ENCODE measurements at regions of chr1 and their contacts with region 1.

Region 1: DNA sequence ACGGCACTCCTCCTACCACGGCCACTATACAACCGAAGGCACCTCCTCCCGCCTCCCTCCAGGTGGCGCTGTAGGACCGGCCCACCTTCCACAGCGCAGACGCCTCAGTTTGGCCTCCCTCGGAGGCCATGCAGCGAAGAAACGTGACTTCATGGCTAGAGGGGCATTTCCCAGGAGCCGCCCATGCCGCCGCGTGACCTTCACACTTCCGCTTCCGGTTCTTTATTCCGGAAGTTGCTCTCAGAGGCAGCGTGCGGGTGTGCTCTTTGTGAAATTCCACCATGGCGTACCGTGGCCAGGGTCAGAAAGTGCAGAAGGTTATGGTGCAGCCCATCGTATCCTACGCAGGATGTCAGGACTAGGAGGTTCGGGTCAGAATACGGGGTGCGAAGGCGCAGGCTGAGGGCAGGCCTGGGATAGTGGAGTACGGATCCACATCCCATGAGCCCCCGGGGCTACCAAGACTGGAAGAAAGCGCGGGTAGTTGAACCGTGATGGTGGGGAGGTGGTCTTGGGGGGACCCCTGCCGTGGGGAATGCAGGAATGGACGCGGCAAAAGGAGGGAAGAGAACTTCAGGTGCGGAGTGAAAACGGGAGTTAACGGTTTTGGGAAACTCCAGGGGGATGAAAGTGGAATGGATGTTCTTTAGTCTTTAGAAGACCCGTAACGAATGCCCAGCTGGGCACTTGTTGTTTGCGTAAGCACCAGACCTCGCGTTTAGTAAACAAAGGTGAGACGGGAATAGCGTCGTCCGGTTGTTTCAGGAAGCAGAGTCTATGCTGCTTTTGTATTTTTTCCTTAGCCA is at the start of gene SNRPE:
- DNase-seq: peak; percentile 97
- ATAC-seq: peak; percentile 99
- total RNA-seq, gene SNRPE: 63.1 TPM

Region 2: GRCh38 chr1:204127598-204128242 is 266.1 kb after region 1 on chr1:
- intact Hi-C with region 1: loop called (anchors 1 kb)
- DNase-seq: no peak
- ATAC-seq: peak; percentile 13

Region 3: GRCh38 chr1:204207136-204207616 is 345.6 kb after region 1 on chr1:
- intact Hi-C with region 1: loop called (anchors 2 kb)
- DNase-seq: no peak
- ATAC-seq: peak; percentile 84

Region 4: DNA sequence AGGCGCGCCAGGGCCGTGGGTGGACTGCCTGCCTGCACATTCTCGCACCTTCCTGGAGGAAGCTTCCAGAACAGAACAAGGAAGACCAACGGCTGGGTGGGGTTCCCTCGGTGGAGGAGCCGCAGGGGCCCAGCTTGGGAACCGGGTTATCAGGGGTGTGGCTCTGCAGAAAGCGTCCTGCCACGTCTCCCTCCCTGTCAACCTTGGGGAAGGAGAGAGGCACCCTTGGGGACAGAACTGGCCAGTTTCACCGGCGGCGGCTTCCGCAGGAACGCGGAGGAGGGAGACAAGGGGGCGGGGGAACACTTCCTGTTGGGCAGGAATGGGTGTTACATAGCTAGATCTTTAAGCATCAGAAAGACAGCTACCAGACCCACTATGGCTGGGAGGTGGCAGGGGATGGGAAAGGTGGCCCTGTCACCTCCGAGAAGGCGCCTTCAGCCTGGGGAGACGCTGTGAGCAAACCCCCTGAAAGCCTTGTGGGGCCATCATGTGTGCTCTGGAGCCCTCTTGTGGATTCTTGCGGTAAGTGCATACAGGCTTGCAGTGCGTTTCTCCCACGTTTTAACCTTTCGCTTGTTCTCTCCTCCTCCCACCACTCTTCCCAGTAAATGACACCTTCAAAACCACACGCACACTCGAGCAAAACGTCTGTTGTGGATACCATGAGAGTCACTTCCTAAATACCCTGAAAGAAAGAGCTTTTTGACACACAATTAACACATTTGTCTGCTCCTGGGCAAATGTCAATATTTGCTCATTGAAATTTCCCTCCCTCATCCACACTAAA is 501.9 kb after region 1 on chr1:
- intact Hi-C with region 1: loop called (anchors 5 kb)
- DNase-seq: peak; percentile 86
- ATAC-seq: peak; percentile 73

Region 5: GRCh38 chr1:204411451-204412204 is 550.0 kb after region 1 on chr1 and contains the start of gene PPP1R15B:
- intact Hi-C with region 1: loop called (anchors 5 kb)
- DNase-seq: peak; percentile 97
- ATAC-seq: peak; percentile 95
- total RNA-seq, gene PPP1R15B: 21.0 TPM

Measured in Right ventricle myocardium inferior (tissue), 1 donor.